Transverse colon (tissue), 4 donors: ENCODE measurements at regions of chr20 and their contacts with region 1.

Region 1: GRCh38 chr20:46494077-46494476 is 19.3 kb downstream of the ZNF334 start:
- DNase-seq: no peak
- H3K4me3 ChIP-seq: no peak overlapping the region
- H3K27ac ChIP-seq: no peak overlapping the region
- H3K4me1 ChIP-seq: no peaks in the 10 kb centered on the region
- H3K27me3 ChIP-seq: peaks cover 11% of the 10 kb centered on the region
- CTCF ChIP-seq: no peak
- EP300 ChIP-seq: no peak
- POLR2A ChIP-seq: no peak

Region 2: DNA sequence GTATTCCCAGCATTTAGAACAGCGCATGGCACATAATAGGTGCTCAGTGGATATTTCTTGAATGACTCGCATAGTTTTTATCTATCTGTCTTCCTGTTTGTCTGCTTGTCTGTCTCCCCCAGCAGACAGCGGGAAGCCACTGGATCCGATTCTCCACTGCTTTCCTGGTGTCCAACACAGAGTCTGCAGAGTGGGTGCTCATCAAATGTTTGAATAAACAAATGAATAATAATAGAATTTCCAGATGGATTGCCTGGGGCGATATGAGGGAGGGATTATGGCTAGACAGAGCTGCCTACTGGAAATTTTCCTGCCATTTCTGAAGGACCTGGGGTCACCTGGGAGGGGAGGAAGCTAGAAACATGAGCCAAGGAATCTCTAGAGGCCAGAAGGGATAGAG is 204.6 kb before region 1 on chr20:
- in situ Hi-C with region 1: no loop called
- intact Hi-C with region 1: loop called (anchors 5 kb)
- DNase-seq: no peak
- H3K4me3 ChIP-seq: no peak overlapping the region
- H3K27ac ChIP-seq: no peak overlapping the region
- H3K4me1 ChIP-seq: no peaks in the 10 kb centered on the region
- H3K27me3 ChIP-seq: peaks cover 41% of the 10 kb centered on the region
- CTCF ChIP-seq: no peak
- EP300 ChIP-seq: no peak
- POLR2A ChIP-seq: no peak

Region 3: GRCh38 chr20:46378412-46379009 is 115.6 kb before region 1 on chr20:
- in situ Hi-C with region 1: no loop called
- intact Hi-C with region 1: no loop called
- DNase-seq: no peak
- H3K4me3 ChIP-seq: no peak overlapping the region
- H3K27ac ChIP-seq: no peak overlapping the region
- H3K4me1 ChIP-seq: no peaks in the 10 kb centered on the region
- H3K27me3 ChIP-seq: no peaks in the 10 kb centered on the region
- CTCF ChIP-seq: no peak
- EP300 ChIP-seq: no peak
- POLR2A ChIP-seq: no peak

Region 4: DNA sequence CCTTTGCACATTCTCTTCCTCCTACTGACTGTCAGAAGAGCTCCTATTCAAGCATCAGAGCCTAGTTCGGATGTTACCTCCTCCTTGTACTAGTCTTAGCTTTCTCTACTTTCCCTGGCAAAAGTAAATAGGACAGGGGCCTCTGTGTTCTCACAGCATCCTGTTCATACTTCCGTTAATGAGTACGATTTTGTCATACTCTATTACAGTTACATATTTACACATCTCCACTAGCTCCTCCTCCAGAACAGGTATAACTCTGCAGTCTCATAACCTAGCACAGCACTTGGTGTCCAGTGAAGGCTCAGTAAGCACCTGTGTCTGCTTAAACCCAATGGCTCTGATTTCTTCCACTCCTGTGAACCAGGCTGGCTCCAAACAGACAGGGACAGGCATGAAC is 94.7 kb before region 1 on chr20:
- in situ Hi-C with region 1: no loop called
- intact Hi-C with region 1: no loop called
- DNase-seq: no peak
- H3K4me3 ChIP-seq: no peak overlapping the region
- H3K27ac ChIP-seq: peak overlapping the region; percentile 69 to 84 (median 78)
- H3K4me1 ChIP-seq: peaks cover 26 to 75% (median 43%) of the 10 kb centered on the region in 4 donors
- H3K27me3 ChIP-seq: no peaks in the 10 kb centered on the region
- CTCF ChIP-seq: no peak
- EP300 ChIP-seq: no peak
- POLR2A ChIP-seq: peak; percentile 33